HAP-1 (cell line): ENCODE measurements at regions of chr15 and their contacts with region 1.

Region 1: DNA sequence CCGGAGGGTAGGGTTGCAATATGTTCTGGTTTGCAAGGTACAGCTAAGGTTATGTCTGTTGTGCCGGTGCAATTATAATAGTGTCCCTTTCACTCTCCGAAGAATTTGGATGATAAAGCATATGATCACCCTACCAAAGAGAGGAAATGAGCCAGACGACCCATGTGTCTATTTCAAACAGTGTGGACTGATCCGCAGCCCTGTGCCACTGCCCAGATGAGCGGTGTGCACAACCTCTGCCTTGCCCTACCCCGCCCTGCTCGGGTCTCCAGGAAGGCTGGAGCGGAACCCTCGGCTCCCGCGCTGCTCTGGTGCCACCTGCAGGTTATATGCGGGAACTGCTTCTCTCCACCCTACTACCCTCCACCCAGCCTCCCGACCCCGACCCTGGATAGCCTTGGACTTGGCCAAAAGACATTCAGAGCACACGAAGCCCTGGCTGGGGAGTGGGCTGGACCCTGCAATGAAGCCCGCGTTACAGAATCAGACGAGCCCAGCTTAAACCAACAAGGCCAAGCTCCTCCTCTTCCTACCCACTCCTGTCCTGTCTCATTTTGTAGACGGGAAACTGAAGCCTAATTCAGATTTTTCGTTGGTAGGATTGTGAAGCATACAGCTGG is 68.4 kb upstream of the CHRNB4 start:
- DNase-seq: peak; percentile 84 to 95
- H3K4me3 ChIP-seq: no peak overlapping the region
- H3K4me1 ChIP-seq: 0 out of 2 replicates have a peak, but pooled peaks cover 3% of the 10 kb centered on the region
- H3K27me3 ChIP-seq: peaks cover 33% of the 10 kb centered on the region

Region 2: GRCh38 chr15:77695961-77696582 is 1013.3 kb before region 1 on chr15:
- in situ Hi-C with region 1: no loop called
- DNase-seq: no peak
- H3K4me3 ChIP-seq: no peak overlapping the region
- H3K4me1 ChIP-seq: no peaks in the 10 kb centered on the region
- H3K27me3 ChIP-seq: peaks cover 22% of the 10 kb centered on the region

Region 3: GRCh38 chr15:78308422-78309032 is 400.8 kb before region 1 on chr15:
- in situ Hi-C with region 1: loop called (anchors 10 kb)
- DNase-seq: peak; percentile 86 to 95
- H3K4me3 ChIP-seq: no peak overlapping the region
- H3K4me1 ChIP-seq: peaks cover 4% of the 10 kb centered on the region
- H3K27me3 ChIP-seq: no peaks in the 10 kb centered on the region

Region 4: DNA sequence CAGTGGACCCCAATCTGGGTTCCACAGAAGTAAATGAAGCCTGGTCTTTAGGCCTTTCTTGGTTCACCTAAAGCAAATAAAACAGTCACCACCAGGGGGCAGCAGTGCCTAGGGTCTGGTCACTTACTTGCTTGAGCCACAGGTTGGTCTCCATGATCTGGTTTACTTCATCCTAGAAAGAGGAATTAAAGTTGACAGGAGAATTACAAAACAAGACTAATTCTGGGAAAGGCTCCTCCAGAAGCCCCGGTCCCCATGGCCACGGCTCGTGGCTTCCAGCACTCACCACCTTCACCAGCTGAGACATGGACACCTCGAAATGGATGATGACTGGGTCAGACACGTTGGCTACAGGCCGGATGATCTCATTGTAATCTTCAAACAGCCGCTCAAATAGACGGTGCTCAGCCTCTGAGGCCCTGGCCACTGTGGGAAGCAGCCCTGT is 90.9 kb before region 1 on chr15:
- in situ Hi-C with region 1: loop called (anchors 5 kb)
- DNase-seq: peak; percentile 82 to 100
- H3K4me3 ChIP-seq: no peak overlapping the region
- H3K4me1 ChIP-seq: peaks cover 4% of the 10 kb centered on the region; the same call in 1 of the 2 replicates
- H3K27me3 ChIP-seq: peaks cover 38% of the 10 kb centered on the region